Activated CD4-positive, alpha-beta T cell treated with anti-CD3 and anti-CD28 coated beads for 36 hours (primary cell): ENCODE measurements at regions of chr2 and their contacts with region 1.

Region 1: GRCh38 chr2:240840435-240841080 is 20.5 kb upstream of the KIF1A start:
- DNase-seq: peak; percentile 52
- ATAC-seq: peak; percentile 66
- H3K4me3 Mint-ChIP-seq: no peak overlapping the region
- H3K27ac Mint-ChIP-seq: no peak overlapping the region
- H3K4me1 Mint-ChIP-seq: no peaks in the 10 kb centered on the region
- H3K27me3 Mint-ChIP-seq: peaks cover 4% of the 10 kb centered on the region

Region 2: GRCh38 chr2:240513549-240514287 is 326.8 kb before region 1 on chr2:
- CTCF ChIA-PET with region 1: interaction called, 8 read pairs
- POLR2A ChIA-PET with region 1: no interaction called
- intact Hi-C with region 1: loop called in 1 of 2 experiments (anchors 5 kb)
- DNase-seq: peak; percentile 93
- ATAC-seq: peak; percentile 99
- H3K4me3 Mint-ChIP-seq: no peak overlapping the region
- H3K27ac Mint-ChIP-seq: peak overlapping the region; percentile 71
- H3K4me1 Mint-ChIP-seq: peaks cover 13% of the 10 kb centered on the region
- H3K27me3 Mint-ChIP-seq: no peaks in the 10 kb centered on the region

Region 3: DNA sequence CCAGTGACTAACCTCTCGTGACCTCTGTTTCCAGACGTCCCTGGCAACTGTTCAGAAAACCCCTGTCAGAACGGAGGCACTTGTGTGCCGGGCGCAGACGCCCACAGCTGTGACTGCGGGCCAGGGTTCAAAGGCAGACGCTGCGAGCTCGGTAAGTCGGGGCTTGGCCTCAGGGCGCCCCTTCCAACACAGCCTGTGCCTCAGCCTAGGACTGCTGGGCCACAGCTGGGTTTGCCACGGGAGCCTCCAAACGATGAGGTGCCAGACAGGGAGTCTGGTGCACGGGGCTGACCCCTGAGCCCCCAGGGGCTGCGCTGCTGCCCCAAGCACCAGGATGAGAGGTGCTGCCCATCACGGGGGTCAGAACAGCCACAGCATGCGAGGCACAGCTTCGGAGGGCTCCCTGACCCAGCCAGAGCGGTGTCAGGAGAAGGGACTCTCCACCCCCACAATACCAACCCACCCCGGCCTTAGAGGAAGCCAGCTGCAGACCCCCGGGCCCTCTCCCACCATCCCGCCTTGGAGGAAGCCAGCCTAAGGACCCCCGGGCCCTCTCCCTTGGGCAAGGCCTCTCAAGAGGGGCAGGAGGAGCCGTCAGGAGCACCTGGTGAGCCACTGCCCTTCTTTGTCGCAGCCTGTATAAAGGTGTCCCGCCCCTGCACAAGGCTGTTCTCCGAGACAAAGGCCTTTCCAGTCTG is 241.2 kb after region 1 on chr2:
- CTCF ChIA-PET with region 1: no interaction called
- POLR2A ChIA-PET with region 1: no interaction called
- intact Hi-C with region 1: no loop called
- DNase-seq: no peak
- ATAC-seq: no peak
- H3K4me3 Mint-ChIP-seq: no peak overlapping the region
- H3K27ac Mint-ChIP-seq: no peak overlapping the region
- H3K4me1 Mint-ChIP-seq: no peaks in the 10 kb centered on the region
- H3K27me3 Mint-ChIP-seq: no peaks in the 10 kb centered on the region